ENCODE measurements at regions of chr17 and their contacts with region 1.

Region 1: GRCh38 chr17:4304417-4305027 is 40.7 kb upstream of the ANKFY1 start:
- DNase-seq: no peak
- H3K4me3 ChIP-seq: no peak overlapping the region
- H3K27ac ChIP-seq: peak overlapping the region in 3 of 4 donors; percentile 11 to 42 (median 34)
- H3K4me1 ChIP-seq: peaks cover 0 to 62% (median 35%) of the 10 kb centered on the region in 4 donors
- H3K27me3 ChIP-seq: no peaks in the 10 kb centered on the region
- CTCF ChIP-seq: peak; percentile 18 to 75 (median 51)
- EP300 ChIP-seq: no peak
- POLR2A ChIP-seq: no peak

Region 2: GRCh38 chr17:4250887-4251286 is 53.6 kb before region 1 on chr17:
- intact Hi-C with region 1: no loop called
- DNase-seq: no peak
- H3K4me3 ChIP-seq: no peak overlapping the region
- H3K27ac ChIP-seq: peak overlapping the region in 1 of 4 donors; percentile 24
- H3K4me1 ChIP-seq: peaks cover 0 to 75% (median 46%) of the 10 kb centered on the region in 4 donors
- H3K27me3 ChIP-seq: no peaks in the 10 kb centered on the region
- CTCF ChIP-seq: no peak
- EP300 ChIP-seq: no peak
- POLR2A ChIP-seq: no peak

Region 3: DNA sequence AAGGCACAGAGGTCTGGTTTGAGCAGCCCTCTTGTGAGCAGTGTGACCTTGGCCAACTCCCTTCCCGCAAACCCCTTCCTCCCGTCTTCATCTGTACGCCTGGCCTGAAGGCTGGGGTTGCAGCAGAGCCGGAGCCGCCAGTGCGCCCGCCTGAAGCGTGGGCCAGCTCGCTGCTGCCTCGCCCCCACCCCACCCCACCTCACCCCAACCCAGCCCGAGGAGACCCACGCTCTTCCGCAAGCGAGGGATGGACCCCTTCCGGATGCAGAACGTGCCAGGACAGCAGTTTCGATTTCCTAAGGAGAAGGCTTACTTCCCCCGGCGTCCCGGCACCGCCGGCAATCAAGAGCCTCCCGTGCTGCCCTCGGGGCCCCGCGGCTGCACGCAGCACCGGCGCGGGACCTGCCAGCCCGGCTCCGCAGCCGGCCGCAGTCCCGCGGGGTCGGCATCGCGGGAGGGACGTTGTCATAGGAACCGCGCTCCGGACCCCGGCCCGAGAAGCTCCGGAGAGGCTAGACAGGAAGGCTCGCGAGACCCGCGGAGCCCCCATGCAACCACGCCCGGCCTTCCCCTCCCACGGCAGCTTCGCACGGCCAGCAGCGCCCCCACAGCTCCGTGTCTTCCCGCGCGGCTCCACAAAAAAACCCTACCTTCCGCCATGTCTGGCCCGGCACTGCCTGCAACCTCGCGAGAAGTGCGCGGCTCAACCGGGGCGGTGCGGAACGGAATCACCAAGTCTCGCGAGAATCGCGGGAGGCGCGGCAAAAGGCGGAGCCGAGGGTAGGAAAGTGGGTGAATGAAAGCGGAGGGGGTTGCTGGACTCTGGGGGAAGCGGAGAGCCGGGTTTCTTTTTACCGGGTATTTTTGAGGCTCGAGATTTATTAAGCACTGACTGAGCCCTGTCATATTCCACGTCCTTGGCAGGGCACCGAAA is 41.0 kb before region 1 on chr17 and contains the start of gene ANKFY1:
- intact Hi-C with region 1: loop called (anchors 5 kb)
- DNase-seq: peak; percentile 98
- H3K4me3 ChIP-seq: peak within 1 kb of the TSS; percentile 93 to 100 (median 99)
- H3K27ac ChIP-seq: peak within 1 kb of the TSS; percentile 87 to 96 (median 94)
- H3K4me1 ChIP-seq: peaks cover 0 to 33% (median 29%) of the 10 kb centered on the region in 4 donors
- H3K27me3 ChIP-seq: no peaks in the 10 kb centered on the region
- CTCF ChIP-seq: no peak
- EP300 ChIP-seq: no peak
- POLR2A ChIP-seq: peak; percentile 73 to 75
- total RNA-seq, gene ANKFY1: 52.6 to 68.0 (median 59.8) TPM